Tibial artery (tissue), 4 donors: ENCODE measurements at regions of chr5 and their contacts with region 1.

Region 1: GRCh38 chr5:138077065-138077696 is 6.7 kb upstream of the WNT8A start:
- DNase-seq: peak; percentile 67 to 68
- H3K4me3 ChIP-seq: no peak overlapping the region
- H3K27ac ChIP-seq: no peak overlapping the region
- H3K4me1 ChIP-seq: no peaks in the 10 kb centered on the region
- H3K27me3 ChIP-seq: no peaks in the 10 kb centered on the region
- CTCF ChIP-seq: peak; percentile 79 to 80

Region 2: DNA sequence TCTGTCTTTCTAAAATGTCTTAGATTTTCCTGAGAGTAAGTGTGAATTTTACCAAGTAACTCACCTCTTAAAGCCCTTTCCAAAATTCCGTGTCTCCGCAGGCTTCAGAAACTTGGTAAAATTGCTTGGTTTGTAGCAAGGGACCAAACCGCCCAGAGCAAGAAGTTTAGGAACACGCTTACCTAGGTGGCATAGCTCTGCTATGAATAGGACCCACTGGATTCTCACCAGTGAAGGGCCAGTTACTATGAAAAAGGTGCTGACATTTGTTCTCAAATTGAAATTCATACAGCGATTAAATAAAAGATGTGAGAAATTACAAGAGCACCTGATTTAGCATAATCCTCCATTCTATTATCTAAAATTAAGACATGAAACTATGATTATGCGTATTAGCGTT is 55.4 kb after region 1 on chr5:
- intact Hi-C with region 1: loop called (anchors 5 kb)
- DNase-seq: no peak
- H3K4me3 ChIP-seq: no peak overlapping the region
- H3K27ac ChIP-seq: no peak overlapping the region
- H3K4me1 ChIP-seq: no peaks in the 10 kb centered on the region
- H3K27me3 ChIP-seq: no peaks in the 10 kb centered on the region
- CTCF ChIP-seq: no peak

Region 3: GRCh38 chr5:138528208-138528607 is 451.0 kb after region 1 on chr5:
- intact Hi-C with region 1: no loop called
- DNase-seq: no peak
- H3K4me3 ChIP-seq: no peak overlapping the region
- H3K27ac ChIP-seq: no peak overlapping the region
- H3K4me1 ChIP-seq: peaks cover 0 to 4% (median 0%) of the 10 kb centered on the region in 4 donors
- H3K27me3 ChIP-seq: no peaks in the 10 kb centered on the region
- CTCF ChIP-seq: no peak

Region 4: GRCh38 chr5:139164020-139164419 is 1086.8 kb after region 1 on chr5:
- intact Hi-C with region 1: no loop called
- DNase-seq: no peak
- H3K4me3 ChIP-seq: no peak overlapping the region
- H3K27ac ChIP-seq: no peak overlapping the region
- H3K4me1 ChIP-seq: peaks cover 0 to 8% (median 0%) of the 10 kb centered on the region in 4 donors
- H3K27me3 ChIP-seq: no peaks in the 10 kb centered on the region
- CTCF ChIP-seq: no peak